ENCODE measurements at regions of chr2 and their contacts with region 1.

Region 1: DNA sequence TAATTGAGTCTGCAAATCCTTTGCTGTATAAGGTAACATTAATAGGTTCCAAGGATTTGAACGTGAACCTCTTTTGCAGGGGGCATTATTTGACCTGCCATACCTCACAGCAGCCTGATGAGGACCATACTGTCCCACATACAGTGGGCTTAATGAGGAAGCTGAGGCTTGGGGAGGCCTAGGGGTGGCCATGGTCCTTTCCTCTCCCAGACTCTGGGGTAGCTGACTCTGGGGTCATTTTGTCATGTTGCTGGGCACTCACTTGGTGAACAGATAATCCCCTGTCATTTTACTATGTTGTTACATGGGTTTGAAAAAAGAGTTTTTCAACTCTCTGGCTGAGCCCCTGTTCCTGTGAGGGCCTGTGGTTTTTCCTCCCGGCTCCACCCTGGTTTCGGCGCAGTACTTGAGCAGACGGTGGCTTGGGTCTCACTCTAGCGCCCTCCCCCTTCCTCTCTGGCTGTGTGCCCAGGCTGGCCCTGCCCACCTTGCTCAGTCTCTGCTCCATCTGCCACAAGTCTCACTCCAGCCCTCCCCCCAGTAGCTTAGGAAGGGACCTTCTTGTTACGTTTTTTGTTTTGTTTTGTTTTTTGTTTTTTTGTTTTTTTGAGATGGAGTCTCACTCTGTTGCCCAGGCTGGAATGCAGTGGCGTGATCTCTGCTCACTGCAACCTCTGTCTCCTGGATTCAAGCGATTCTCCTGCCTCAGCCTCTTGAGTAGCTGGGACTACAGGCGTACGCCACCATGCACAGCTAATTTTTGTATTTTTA is 21.0 kb downstream of the INPP4A start:
- DNase-seq: peak; percentile 56 to 93
- ATAC-seq: peak; percentile 25 to 53 (median 46)
- H3K4me3 ChIP-seq: peak overlapping the region; percentile 8
- H3K4me3 Mint-ChIP-seq: peak overlapping the region; percentile 94
- H3K27ac ChIP-seq: peak overlapping the region; percentile 95
- H3K27ac Mint-ChIP-seq: peak overlapping the region; percentile 98 to 99
- H3K4me1 ChIP-seq: peaks cover 99% of the 10 kb centered on the region
- H3K4me1 Mint-ChIP-seq: peaks cover 75 to 88% of the 10 kb centered on the region in 2 donors
- H3K27me3 ChIP-seq: no peaks in the 10 kb centered on the region
- H3K27me3 Mint-ChIP-seq: no peaks in the 10 kb centered on the region
- CTCF ChIP-seq: no peak

Region 2: DNA sequence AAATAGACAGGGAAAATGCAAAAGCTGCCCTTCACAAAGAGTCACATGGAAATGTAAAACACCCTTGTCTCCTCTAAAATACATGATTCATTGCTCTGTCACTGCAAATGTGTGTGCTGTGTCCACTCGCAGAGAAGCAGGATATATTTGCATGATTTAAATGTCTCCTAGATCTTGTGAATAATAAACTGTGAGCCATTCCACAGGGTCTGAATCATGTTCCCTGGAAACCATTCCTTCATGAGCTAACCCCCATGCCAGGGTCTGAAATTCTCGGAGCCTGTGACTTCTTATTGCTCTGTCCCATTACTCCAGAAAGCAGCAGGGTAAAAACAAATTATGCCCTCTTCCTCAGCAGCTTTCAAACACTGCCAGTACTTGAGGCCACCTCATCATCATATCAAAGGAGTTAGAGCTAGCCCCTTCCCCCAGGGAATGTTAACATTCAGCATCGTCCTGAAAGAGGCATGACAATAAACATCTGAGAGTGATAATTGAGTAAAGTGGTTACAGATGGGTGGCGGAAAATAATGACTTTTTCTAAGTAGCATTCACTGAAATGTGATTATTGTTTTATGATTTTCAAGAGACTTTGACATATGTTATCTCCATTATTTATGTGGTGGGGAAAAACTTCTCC is 131.1 kb before region 1 on chr2:
- intact Hi-C with region 1: no loop called
- DNase-seq: no peak
- ATAC-seq: no peak
- H3K4me3 ChIP-seq: no peak overlapping the region
- H3K4me3 Mint-ChIP-seq: no peak overlapping the region
- H3K27ac ChIP-seq: no peak overlapping the region
- H3K27ac Mint-ChIP-seq: no peak overlapping the region
- H3K4me1 ChIP-seq: no peaks in the 10 kb centered on the region
- H3K4me1 Mint-ChIP-seq: no peaks in the 10 kb centered on the region
- H3K27me3 ChIP-seq: no peaks in the 10 kb centered on the region
- H3K27me3 Mint-ChIP-seq: peaks cover 19 to 25% of the 10 kb centered on the region in 2 donors
- CTCF ChIP-seq: no peak

Region 3: DNA sequence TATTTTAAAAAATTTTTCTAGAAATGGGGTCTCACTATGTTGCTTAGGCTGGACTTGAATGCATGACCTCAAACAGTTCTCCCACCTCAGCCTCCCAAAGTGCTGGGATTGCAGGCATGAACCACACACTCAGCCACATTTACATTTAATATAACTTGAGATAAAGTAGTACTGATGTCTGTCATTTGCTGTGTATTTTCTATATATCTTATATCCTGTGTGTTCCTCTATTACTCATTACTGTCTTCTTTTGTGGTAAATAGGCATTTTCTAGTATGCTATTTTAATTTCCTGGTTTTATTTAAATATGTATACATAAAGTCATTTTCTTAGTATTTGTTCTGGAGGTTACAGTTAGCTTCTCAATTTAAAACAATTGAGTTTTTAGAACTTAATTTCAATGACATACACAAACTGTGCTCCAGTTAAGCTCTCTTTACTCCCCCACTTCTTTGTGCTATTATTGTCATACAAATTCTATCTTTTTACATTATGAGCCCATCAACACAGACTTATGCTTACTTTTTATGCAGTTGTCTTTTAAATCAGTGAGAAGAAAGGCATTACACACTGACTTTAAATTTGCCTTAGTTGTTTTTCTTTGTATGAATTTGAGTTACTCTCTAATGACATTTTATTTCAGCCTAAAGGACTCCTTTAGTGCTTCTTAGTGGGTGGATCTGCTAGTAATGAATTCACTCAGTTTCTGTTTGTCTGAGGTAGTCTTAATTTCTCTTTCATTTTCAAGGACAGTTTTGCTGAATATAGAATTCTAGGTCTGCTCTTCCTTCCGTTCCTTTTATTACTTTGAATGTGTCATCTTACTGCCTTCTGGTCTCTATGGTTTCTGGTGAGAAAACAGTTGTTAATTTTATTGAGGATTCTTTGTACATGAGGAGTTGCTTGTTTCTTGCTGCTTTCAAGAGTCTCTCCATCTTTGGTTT is 27.2 kb before region 1 on chr2:
- intact Hi-C with region 1: loop called (anchors 2 kb)
- DNase-seq: peak in 1 of 2 donors; percentile 65
- ATAC-seq: peak; percentile 92 to 99 (median 94)
- H3K4me3 ChIP-seq: no peak overlapping the region
- H3K4me3 Mint-ChIP-seq: peak overlapping the region; percentile 76
- H3K27ac ChIP-seq: peak overlapping the region; percentile 86
- H3K27ac Mint-ChIP-seq: peak overlapping the region; percentile 79 to 98
- H3K4me1 ChIP-seq: peaks cover 3% of the 10 kb centered on the region
- H3K4me1 Mint-ChIP-seq: peaks cover 24% of the 10 kb centered on the region in 2 donors
- H3K27me3 ChIP-seq: no peaks in the 10 kb centered on the region
- H3K27me3 Mint-ChIP-seq: no peaks in the 10 kb centered on the region
- CTCF ChIP-seq: no peak

Region 4: GRCh38 chr2:98455494-98455976 is 10.1 kb before region 1 on chr2:
- intact Hi-C with region 1: loop called (anchors 1 kb)
- DNase-seq: peak in 1 of 2 donors; percentile 78
- ATAC-seq: peak; percentile 52 to 74 (median 60)
- H3K4me3 ChIP-seq: no peak overlapping the region
- H3K4me3 Mint-ChIP-seq: peak overlapping the region; percentile 77
- H3K27ac ChIP-seq: peak overlapping the region; percentile 94
- H3K27ac Mint-ChIP-seq: peak overlapping the region; percentile 98 to 99
- H3K4me1 ChIP-seq: peaks cover 96% of the 10 kb centered on the region
- H3K4me1 Mint-ChIP-seq: peaks cover 92 to 93% of the 10 kb centered on the region in 2 donors
- H3K27me3 ChIP-seq: no peaks in the 10 kb centered on the region
- H3K27me3 Mint-ChIP-seq: no peaks in the 10 kb centered on the region
- CTCF ChIP-seq: no peak

Region 5: DNA sequence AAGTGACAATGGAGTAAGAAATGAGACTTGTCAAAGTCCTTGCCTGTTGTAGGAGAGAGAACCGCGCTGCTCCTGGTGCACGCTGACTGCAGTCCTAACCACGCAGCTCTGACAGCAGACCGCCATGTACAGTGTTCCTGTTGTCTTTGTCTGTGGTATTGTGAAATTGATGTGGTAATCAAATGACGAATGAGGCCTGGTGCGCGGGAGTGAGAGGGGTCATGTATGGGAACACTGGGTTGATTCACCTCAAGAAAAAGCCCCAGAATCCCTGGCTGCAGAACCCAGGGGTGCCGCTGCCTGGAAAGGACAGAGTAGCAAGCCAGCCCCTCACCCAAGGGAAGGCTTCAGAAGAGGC is 43.0 kb after region 1 on chr2:
- intact Hi-C with region 1: loop called (anchors 2 kb)
- DNase-seq: peak; percentile 36 to 72
- ATAC-seq: peak; percentile 62 to 77 (median 73)
- H3K4me3 ChIP-seq: no peak overlapping the region
- H3K4me3 Mint-ChIP-seq: peak overlapping the region; percentile 53
- H3K27ac ChIP-seq: peak overlapping the region; percentile 55
- H3K27ac Mint-ChIP-seq: peak overlapping the region; percentile 85 to 91
- H3K4me1 ChIP-seq: peaks cover 96% of the 10 kb centered on the region
- H3K4me1 Mint-ChIP-seq: peaks cover 94 to 97% of the 10 kb centered on the region in 2 donors
- H3K27me3 ChIP-seq: no peaks in the 10 kb centered on the region
- H3K27me3 Mint-ChIP-seq: no peaks in the 10 kb centered on the region
- CTCF ChIP-seq: no peak